Aorta (tissue), 5 donors: ENCODE measurements at regions of chr2 and their contacts with region 1.

Region 1: GRCh38 chr2:1653956-1654695 is 90.2 kb downstream of the PXDN start:
- DNase-seq: no peak
- ATAC-seq: peak; percentile 9
- H3K4me3 ChIP-seq: no peak overlapping the region
- H3K27ac ChIP-seq: peak overlapping the region; percentile 71 to 88
- H3K4me1 ChIP-seq: peaks cover 4 to 7% of the 10 kb centered on the region in 2 donors
- H3K27me3 ChIP-seq: no peaks in the 10 kb centered on the region

Region 2: DNA sequence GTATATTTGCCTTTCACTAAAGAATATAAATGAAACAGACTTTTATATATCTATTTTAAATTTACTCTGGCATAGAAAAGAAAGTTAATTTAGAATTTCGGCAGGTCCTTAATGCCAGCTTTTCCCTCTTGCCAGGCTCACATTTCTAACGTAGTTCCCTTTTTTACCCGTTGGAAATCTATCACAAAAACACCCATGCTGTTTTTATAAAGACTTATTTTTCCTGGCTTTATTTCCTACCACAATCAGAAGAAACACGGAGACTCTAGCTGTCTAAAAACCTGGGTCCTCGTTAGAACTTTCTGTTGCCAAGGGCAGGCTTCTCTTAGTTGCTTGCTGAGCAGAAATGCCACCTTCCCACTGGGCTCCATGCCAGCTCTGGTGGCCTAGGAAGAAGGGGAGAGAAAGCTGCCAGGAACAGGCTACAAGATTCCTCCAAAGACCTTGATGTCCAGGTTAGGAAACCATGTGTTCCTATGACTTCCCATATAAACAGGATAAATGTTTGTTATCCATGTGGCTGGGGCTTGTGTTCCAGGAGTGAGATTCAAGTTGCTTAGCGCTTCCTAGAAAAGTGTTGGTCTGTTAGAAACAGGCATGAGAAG is 959.1 kb before region 1 on chr2:
- intact Hi-C with region 1: loop called in 1 of 2 experiments (anchors 5 kb)
- DNase-seq: peak in 1 of 2 donors; percentile 83
- ATAC-seq: no peak
- H3K4me3 ChIP-seq: no peak overlapping the region
- H3K27ac ChIP-seq: peak overlapping the region; percentile 8 to 64
- H3K4me1 ChIP-seq: peaks cover 1 to 3% of the 10 kb centered on the region in 2 donors
- H3K27me3 ChIP-seq: no peaks in the 10 kb centered on the region

Region 3: GRCh38 chr2:1581965-1582625 is 72.0 kb before region 1 on chr2:
- intact Hi-C with region 1: no loop called
- DNase-seq: peak in 1 of 2 donors; percentile 14
- ATAC-seq: no peak
- H3K4me3 ChIP-seq: no peak overlapping the region
- H3K27ac ChIP-seq: no peak overlapping the region
- H3K4me1 ChIP-seq: no peaks in the 10 kb centered on the region
- H3K27me3 ChIP-seq: no peaks in the 10 kb centered on the region

Region 4: DNA sequence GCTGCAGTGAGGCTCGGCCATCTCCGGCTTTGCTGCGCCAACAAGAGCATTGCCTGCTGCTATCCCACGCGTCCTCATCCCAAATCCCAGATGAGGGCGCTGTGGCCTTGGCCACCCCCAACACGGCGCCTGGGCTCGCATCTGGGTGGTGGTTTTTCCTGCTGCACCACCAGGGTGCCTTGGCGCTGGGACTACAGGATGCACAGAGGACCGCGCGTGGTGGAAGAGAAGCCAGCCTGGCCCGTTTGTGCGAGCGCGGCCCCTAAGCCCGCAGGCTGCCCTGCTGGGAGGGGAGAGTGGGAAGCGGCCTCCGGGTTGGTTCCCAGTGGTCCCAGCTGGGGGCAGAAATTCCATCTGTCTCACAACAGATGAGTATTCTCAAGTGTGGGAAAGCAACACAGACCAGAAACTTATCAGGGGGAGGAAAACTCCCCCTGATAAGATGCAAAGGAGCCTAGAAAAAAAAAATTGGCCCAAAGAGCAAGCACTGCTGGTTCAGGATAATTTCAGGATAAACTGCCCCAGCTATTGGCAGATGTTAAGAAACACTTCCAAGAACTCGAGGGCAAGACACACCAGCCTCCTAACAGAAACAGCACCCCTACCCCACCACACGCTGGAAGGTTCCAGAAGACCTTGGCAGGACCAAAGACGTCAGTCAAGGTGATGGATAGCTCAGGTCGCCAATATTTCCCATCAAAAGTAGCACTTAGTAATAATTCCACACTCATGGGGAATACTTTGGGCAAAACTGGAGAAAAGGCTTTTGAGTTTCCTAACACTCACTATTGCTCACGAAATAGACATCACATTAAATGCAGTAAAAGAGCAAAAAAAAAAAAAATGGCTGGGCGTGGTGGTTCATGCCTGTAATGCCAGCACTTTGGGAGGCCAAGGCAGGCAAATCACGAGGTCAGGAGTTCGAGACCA is 61.9 kb before region 1 on chr2:
- intact Hi-C with region 1: loop called in 1 of 2 experiments (anchors 2 kb)
- DNase-seq: peak; percentile 88 to 92
- ATAC-seq: peak; percentile 79
- H3K4me3 ChIP-seq: no peak overlapping the region
- H3K27ac ChIP-seq: no peak overlapping the region
- H3K4me1 ChIP-seq: no peaks in the 10 kb centered on the region
- H3K27me3 ChIP-seq: no peaks in the 10 kb centered on the region

Region 5: DNA sequence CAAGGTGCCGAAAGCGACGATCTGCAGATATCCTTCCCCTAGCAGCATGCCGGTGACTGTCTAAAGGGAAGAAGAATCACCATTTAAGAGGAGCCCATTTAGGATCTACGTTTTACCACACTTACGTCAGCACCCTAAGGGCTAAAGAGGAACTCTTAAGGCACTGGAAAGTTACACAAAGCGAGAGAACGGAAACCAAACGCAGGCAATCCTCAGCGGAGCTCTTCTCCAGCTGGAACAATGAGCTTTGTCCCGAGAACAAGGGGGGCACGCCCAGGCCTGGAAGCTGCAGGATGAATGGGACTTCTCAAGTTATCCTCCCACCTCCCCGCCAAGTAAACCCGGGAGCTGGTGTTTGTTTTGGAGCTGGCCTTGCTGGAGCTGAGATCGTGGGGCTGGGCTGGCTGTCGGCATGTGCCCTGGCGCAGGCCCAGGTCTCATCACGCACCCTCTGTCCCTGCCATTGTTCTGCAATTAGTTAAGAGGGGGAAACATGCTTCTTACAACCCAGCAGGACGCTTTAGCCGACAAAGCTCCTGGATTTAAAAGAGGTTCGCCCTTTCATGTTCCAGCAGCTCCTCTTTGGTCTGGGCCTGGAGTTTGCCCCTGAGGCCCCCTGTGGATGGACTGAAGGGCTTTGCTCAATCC is 53.8 kb after region 1 on chr2:
- intact Hi-C with region 1: loop called in 1 of 2 experiments (anchors 5 kb)
- DNase-seq: peak; percentile 79 to 84
- ATAC-seq: peak; percentile 78
- H3K4me3 ChIP-seq: no peak overlapping the region
- H3K27ac ChIP-seq: peak overlapping the region in 1 of 2 donors; percentile 4
- H3K4me1 ChIP-seq: no peaks in the 10 kb centered on the region
- H3K27me3 ChIP-seq: no peaks in the 10 kb centered on the region

Region 6: GRCh38 chr2:1730015-1730927 is 76.1 kb after region 1 on chr2:
- intact Hi-C with region 1: loop called in 1 of 2 experiments (anchors 5 kb)
- DNase-seq: peak in 1 of 2 donors; percentile 76
- ATAC-seq: peak; percentile 43
- H3K4me3 ChIP-seq: no peak overlapping the region
- H3K27ac ChIP-seq: peak overlapping the region; percentile 62 to 94
- H3K4me1 ChIP-seq: peaks cover 4 to 5% of the 10 kb centered on the region in 2 donors
- H3K27me3 ChIP-seq: no peaks in the 10 kb centered on the region

Region 7: DNA sequence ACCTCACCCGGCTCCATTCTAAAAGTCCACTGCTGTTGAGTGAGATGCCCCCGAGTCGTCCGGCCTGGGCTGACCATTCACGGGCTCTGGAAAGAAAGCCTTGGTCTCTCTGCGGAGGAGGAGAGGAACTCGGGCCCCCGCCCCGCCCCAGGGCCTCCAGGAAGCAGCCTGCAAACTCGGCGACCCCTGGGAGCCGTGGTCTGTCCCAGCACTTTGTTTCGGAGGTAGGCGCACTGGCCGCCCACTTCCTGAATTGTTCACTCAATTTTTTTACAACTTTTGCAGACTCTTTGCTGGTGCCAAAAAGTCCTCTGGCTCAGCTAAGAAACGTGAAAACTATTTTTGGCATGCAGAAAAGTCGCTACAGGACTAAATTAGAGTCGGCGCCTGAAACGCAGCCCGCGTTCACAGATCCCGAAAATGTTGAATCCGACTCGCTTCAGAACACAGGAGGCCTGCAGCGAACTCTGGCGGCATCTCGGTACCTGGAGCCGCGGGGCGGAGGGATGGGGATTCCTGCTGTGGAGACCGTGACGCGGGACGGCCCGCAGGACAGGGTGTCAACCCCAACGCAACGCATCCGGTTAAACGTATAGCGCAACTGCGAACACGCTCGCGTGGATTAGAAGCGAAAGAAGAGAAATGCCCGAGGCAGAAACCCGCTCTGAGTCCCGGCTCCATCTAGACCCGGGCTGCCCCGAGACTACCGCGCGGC is 88.7 kb after region 1 on chr2:
- intact Hi-C with region 1: loop called in 1 of 2 experiments (anchors 2 kb)
- DNase-seq: peak; percentile 88 to 95
- ATAC-seq: peak; percentile 77
- H3K4me3 ChIP-seq: peak overlapping the region; percentile 79 to 89
- H3K27ac ChIP-seq: peak overlapping the region; percentile 97 to 98
- H3K4me1 ChIP-seq: no peaks in the 10 kb centered on the region
- H3K27me3 ChIP-seq: no peaks in the 10 kb centered on the region

Region 8: DNA sequence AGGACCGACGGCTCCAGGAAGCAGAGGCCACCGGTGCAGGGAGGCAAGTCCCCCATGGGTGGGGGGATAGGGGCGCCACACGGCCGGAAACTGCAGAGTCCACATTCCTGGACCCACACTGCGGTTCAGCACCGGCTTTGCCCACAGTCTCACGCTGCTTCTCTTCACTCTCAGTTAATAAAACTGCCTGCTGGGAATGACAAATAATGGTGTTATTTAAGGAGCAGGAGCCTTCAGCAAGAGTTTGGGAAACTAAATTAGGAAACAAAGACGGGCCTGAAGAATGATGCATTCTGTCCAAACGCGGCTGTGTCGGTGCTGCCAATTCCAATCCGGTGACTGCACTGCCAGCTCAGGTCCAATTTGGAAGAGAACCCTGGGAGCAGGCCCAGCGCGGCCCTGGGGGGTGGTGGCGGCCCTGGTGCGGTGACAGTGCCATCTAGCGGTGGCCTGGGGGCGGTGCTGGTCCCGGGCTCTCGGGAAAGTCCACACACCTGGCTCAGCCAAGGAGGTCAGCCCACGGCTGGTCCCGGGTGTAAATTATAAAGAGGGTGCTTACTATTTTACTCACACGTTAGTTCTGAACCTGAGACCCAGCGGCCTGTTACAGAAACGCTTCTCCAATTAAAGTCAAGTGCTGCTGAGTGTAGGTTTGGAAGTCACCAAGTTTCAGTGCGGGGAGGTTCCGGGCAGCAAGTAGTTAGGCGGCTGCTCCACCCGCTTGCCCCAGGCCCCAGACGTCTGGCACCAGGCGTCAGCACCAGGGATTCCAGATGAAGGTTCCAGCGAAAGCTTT is 163.3 kb after region 1 on chr2:
- intact Hi-C with region 1: loop called (anchors 5 kb)
- DNase-seq: peak; percentile 94 to 98
- ATAC-seq: peak; percentile 95
- H3K4me3 ChIP-seq: no peak overlapping the region
- H3K27ac ChIP-seq: peak overlapping the region; percentile 70 to 95
- H3K4me1 ChIP-seq: no peaks in the 10 kb centered on the region
- H3K27me3 ChIP-seq: no peaks in the 10 kb centered on the region